HepG2 (cell line): ENCODE measurements at regions of chr5 and their contacts with region 1.

Region 1: DNA sequence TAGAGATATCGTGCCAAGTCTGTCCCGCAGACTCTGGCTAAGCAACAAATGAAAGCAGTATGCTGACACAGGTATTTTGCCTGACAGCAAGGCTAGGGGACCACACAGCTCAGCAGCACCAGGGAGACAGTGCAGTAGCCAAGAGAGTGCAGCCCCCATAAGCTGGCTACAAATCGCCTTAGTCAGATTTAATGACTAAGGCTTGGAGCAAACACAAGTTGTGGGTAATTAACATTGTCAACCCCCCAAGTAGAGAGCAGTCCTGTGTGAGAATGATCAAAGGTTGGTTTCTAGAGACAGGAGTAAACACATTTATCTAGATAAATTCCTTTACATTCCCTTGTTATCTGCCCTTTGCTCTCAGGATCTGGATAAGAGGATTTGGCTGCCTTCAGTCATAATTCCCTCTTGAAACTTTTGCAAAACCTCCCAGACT is 1434.5 kb upstream of the CDH6 start:
- DNase-seq: peak; percentile 97
- ATAC-seq: peak; percentile 100
- H3K4me3 ChIP-seq: peak overlapping the region in 2 of 3 experiments; percentile 19 to 63; a peak in 2 of 6 replicates
- H3K27ac ChIP-seq: peak overlapping the region; percentile 80
- H3K4me1 ChIP-seq: peaks cover 34% of the 10 kb centered on the region
- H3K27me3 ChIP-seq: no peaks in the 10 kb centered on the region
- CTCF ChIP-seq: no peak
- EP300 ChIP-seq: peak in 1 of 2 experiments; percentile 95; a peak in 3 of 4 replicates
- POLR2A ChIP-seq: no peak
- RAD21 ChIP-seq: 0 out of 2 replicates have a peak, but pooled peaks have one; percentile 13

Region 2: GRCh38 chr5:29276371-29276770 is 482.6 kb before region 1 on chr5:
- CTCF ChIA-PET with region 1: no interaction called
- POLR2A ChIA-PET with region 1: no interaction called
- in situ Hi-C with region 1: no loop called
- intact Hi-C with region 1: no loop called
- DNase-seq: no peak
- ATAC-seq: no peak
- H3K4me3 ChIP-seq: no peak overlapping the region
- H3K27ac ChIP-seq: no peak overlapping the region
- H3K4me1 ChIP-seq: no peaks in the 10 kb centered on the region
- H3K27me3 ChIP-seq: no peaks in the 10 kb centered on the region
- CTCF ChIP-seq: no peak
- EP300 ChIP-seq: no peak
- POLR2A ChIP-seq: no peak
- RAD21 ChIP-seq: no peak

Region 3: GRCh38 chr5:29780401-29780800 is 21.4 kb after region 1 on chr5:
- CTCF ChIA-PET with region 1: no interaction called
- POLR2A ChIA-PET with region 1: no interaction called
- in situ Hi-C with region 1: no loop called
- intact Hi-C with region 1: loop called (anchors 1 kb)
- DNase-seq: peak; percentile 89
- ATAC-seq: peak; percentile 89
- H3K4me3 ChIP-seq: no peak overlapping the region
- H3K27ac ChIP-seq: peak overlapping the region; percentile 32
- H3K4me1 ChIP-seq: peaks cover 29% of the 10 kb centered on the region
- H3K27me3 ChIP-seq: no peaks in the 10 kb centered on the region
- CTCF ChIP-seq: no peak
- EP300 ChIP-seq: peak in 1 of 2 experiments; percentile 87; a peak in 2 of 4 replicates
- POLR2A ChIP-seq: no peak
- RAD21 ChIP-seq: no peak

Region 4: DNA sequence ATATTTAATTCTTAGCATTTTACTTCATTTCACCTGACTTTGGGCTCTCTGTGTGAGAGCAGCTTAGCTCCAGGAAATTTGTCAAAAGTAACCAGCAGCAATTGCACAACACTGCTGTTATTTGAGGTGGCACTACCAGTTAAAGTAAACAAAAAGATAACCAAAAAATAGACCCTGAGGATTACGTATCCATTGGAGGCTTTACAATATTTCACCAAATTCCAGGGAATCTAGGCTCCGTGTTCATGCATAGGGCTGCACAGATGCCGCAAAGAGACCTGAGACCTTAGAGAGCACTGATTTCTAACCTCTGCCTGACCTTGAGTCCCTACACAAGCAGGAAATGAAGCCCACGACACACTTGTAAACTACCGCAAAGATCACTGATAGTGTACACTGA is 41.7 kb after region 1 on chr5:
- CTCF ChIA-PET with region 1: no interaction called
- POLR2A ChIA-PET with region 1: no interaction called
- in situ Hi-C with region 1: no loop called
- intact Hi-C with region 1: loop called (anchors 5 kb)
- DNase-seq: peak; percentile 20
- ATAC-seq: peak; percentile 82
- H3K4me3 ChIP-seq: peak overlapping the region in 1 of 3 experiments; percentile 5; a peak in 1 of 6 replicates
- H3K27ac ChIP-seq: no peak overlapping the region
- H3K4me1 ChIP-seq: peaks cover 12% of the 10 kb centered on the region
- H3K27me3 ChIP-seq: no peaks in the 10 kb centered on the region
- CTCF ChIP-seq: no peak
- EP300 ChIP-seq: no peak
- POLR2A ChIP-seq: no peak
- RAD21 ChIP-seq: no peak